ENCODE measurements at regions of chrX and their contacts with region 1.

Region 1: DNA sequence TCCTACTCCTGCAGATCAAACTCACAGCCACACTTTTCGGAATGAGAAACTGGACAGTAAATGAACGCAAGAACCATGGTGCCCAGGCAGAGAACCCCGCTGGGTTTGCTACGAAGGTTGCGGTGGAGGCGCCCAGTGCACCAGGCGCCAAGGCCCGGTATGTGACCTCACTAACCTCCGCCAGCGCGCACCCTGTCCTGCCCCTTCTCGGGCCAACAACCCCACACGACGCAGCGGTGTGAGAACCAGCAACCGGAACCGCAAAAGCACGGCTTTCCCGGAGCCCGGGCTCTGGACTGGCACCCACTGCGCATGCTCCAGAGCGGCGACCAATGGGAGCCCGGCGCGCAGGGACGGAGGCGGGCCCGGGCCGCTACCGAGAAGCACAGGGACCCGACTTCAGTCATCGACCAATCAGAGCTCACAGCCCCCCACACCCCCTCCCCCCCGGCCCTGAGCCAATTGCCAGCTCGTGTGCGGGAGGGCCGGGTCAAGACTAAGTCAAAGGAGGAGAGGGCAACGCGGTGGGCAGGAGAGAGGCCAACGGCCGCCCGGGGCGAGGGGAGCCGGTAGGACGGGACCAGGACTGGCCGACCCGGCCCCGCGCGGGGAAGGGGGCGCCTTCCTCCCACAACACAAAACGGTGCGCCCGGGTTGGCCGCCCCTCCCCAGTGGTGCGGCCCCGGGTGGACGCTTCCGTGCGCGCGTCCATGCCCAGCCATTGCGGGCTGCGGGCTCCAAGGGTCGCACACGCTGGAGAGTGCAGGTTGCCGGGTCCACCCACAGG is 7.3 kb upstream of the WAS start:
- DNase-seq: peak; percentile 91
- ATAC-seq: peak; percentile 95
- H3K4me3 ChIP-seq: peak overlapping the region; percentile 47 to 75 (median 68)
- H3K4me3 Mint-ChIP-seq: peak overlapping the region; percentile 91
- H3K27ac ChIP-seq: peak overlapping the region; percentile 77 to 85
- H3K27ac Mint-ChIP-seq: peak overlapping the region; percentile 93
- H3K4me1 ChIP-seq: peaks cover 0 to 26% of the 10 kb centered on the region in 2 donors
- H3K4me1 Mint-ChIP-seq: peaks cover 18% of the 10 kb centered on the region
- H3K27me3 ChIP-seq: no peaks in the 10 kb centered on the region
- H3K27me3 Mint-ChIP-seq: no peaks in the 10 kb centered on the region
- CTCF ChIP-seq: no peak

Region 2: GRCh38 chrX:48737213-48737938 is 61.1 kb after region 1 on chrX:
- CTCF ChIA-PET with region 1: interaction called, 3 read pairs
- POLR2A ChIA-PET with region 1: interaction called, 5 read pairs
- intact Hi-C with region 1: loop called (anchors 2 kb)
- DNase-seq: peak; percentile 94
- ATAC-seq: peak; percentile 98
- H3K4me3 ChIP-seq: peak overlapping the region; percentile 15 to 75 (median 67)
- H3K4me3 Mint-ChIP-seq: peak overlapping the region; percentile 98
- H3K27ac ChIP-seq: peak overlapping the region; percentile 85 to 91
- H3K27ac Mint-ChIP-seq: peak overlapping the region; percentile 96
- H3K4me1 ChIP-seq: peaks cover 0 to 15% of the 10 kb centered on the region in 2 donors
- H3K4me1 Mint-ChIP-seq: peaks cover 13% of the 10 kb centered on the region
- H3K27me3 ChIP-seq: no peaks in the 10 kb centered on the region
- H3K27me3 Mint-ChIP-seq: no peaks in the 10 kb centered on the region
- CTCF ChIP-seq: no peak

Region 3: GRCh38 chrX:48801280-48802088 is 125.2 kb after region 1 on chrX and contains the start of gene HDAC6:
- CTCF ChIA-PET with region 1: no interaction called
- POLR2A ChIA-PET with region 1: no interaction called
- intact Hi-C with region 1: loop called (anchors 1 kb)
- DNase-seq: peak; percentile 97
- ATAC-seq: peak; percentile 80
- H3K4me3 ChIP-seq: peak within 1 kb of the TSS; percentile 65 to 82 (median 76)
- H3K4me3 Mint-ChIP-seq: peak within 1 kb of the TSS; percentile 96
- H3K27ac ChIP-seq: peak within 1 kb of the TSS; percentile 95 to 96
- H3K27ac Mint-ChIP-seq: peak within 1 kb of the TSS; percentile 98
- H3K4me1 ChIP-seq: peaks cover 4 to 16% of the 10 kb centered on the region in 2 donors
- H3K4me1 Mint-ChIP-seq: peaks cover 14% of the 10 kb centered on the region
- H3K27me3 ChIP-seq: no peaks in the 10 kb centered on the region
- H3K27me3 Mint-ChIP-seq: no peaks in the 10 kb centered on the region
- CTCF ChIP-seq: no peak
- total RNA-seq, gene HDAC6: 168 and 170 TPM in 2 replicates